ENCODE measurements at regions of chr2 and their contacts with region 1.

Region 1: DNA sequence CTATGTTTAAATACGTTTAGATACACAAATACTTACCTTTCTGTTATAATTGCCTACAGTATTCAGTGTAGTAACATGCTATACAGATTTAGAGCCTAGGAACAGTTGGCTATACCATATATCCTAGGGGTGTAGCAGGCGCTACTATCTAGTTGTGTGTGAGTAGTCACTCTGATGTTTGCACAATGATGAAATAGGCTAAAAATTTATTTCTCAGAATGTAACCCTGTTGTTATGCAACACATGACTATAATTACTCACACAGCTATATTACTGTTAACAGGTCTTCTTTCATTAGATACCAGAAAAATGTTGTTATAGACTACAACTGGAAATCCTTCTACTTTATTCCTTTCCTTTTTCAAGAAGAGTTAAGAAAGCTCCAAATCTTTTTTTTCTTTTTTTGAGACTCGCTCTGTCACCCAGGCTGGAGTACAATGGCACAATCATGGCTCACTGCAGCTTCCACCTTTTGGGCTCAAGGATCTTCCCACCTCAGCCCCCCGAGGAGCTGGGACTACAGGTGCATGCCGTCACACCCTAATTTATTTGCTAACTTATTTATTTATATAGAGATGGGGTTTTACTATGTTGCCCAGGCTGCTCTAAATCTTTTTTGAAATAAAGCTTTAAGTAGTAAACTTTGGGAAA is 48.5 kb downstream of the C2orf74 start:
- DNase-seq: no peak

Region 2: GRCh38 chr2:59425247-59425646 is 1785.2 kb before region 1 on chr2:
- intact Hi-C with region 1: loop called in 1 of 2 experiments (anchors 10 kb)
- DNase-seq: no peak